GM10248 (cell line): ENCODE measurements at regions of chr22 and their contacts with region 1.

Region 1: DNA sequence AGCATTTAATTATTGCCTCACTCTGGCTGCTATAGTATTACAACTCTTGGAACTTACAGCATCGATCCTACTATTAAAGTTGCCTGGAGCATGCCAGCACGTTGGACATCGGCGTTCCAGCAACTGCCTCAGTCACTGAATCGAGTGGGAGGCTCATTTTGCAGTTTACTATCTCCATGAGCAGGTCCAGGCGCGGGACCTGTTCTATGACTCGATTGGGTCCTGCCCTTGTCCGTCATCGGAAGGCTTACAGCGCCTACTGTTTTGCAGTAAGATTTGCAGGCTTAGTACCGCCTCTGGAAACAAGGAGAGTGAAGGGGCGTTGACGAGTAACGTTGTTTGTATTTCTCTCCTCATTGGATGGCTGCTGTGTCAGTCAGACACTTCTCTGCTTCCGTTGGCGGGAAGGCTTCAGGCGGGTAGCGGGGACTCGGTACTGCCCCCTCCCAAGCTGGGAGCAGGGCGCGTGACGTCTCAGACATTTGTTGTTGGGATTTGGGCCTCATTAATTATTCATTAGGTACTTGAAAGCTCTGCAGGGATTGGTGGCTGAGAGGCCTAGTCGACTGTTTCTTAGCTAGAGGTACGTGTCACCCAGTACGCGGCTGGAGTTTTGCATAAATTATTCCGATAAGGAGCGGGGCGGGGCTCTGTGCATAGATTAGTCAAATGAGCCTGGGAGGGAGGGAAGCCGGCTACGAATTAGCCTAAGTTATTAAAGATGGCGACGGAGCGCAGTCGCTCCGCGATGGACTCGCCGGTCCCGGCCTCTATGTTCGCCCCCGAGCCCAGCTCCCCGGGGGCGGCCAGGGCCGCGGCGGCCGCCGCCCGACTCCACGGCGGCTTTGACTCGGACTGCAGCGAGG is at the start of gene GTPBP1:
- DNase-seq: peak; percentile 96
- CTCF ChIP-seq: no peak

Region 2: DNA sequence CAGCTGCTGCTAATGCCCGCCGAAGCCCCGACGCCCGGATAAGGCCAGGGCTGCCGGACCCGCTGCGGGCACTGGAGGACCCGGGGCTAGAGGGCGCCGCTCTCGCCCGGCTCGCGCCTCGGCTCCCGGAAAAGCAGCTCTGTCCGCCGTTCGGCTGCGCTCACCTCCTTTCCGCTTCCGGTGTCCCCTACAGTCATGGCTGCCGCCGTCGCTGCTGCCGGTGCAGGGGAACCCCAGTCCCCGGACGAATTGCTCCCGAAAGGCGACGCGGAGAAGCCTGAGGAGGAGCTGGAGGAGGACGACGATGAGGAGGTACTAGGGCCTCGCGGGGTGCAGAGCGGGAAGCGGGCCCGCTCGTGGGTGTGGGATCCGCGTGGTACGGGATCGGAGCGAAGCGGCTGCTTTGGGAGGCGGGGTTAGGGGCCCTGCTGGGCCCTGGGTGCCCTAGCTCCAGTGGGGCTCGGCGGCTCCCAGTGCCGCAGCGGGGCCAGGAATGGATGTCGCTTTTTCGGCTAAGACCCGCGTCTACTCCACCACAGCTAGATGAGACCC is 23.6 kb before region 1 on chr22 and contains the start of gene TOMM22:
- CTCF ChIA-PET with region 1: interaction called, 48 read pairs
- POLR2A ChIA-PET with region 1: interaction called, 5 read pairs
- DNase-seq: peak; percentile 98
- CTCF ChIP-seq: peak; percentile 78

Region 3: DNA sequence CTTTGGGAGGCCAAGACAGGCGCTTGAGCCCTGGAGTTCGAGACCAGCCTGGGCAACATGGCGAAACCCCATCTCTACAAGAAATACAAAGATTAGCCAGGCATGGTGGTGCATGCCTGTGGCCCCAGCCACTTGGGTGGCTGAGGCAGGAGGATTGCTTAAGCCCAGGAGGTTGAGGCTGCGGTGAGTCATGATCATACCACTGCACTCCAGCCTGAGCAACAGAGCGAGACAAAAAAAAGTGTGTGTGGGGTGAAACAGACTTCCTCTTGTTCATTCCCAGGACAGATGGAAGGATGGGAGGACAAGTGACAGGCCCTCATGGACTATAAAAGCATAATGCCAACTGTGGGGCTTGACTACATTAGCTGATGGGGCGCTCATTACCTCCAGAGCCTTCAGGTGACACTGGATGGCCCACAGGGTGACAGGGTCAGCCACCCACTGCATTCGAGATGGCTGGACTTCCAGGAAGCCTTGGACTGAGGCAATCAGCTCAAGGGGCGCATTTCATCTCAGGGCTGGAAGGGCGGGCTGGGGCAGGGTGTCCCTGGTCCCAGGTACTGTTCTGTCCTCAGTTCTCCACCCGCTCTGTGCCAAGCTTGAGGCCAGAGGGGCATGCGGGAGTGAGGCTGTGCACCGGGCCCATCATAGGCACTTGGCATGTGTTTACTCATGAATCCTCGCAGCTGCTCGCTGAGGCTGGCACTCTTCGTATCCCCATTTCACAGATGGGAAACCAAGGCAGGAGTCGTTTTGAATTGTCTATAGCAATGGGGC is 125.9 kb after region 1 on chr22:
- CTCF ChIA-PET with region 1: no interaction called
- POLR2A ChIA-PET with region 1: no interaction called
- DNase-seq: no peak
- CTCF ChIP-seq: no peak

Region 4: GRCh38 chr22:39281126-39281525 is 575.7 kb after region 1 on chr22:
- CTCF ChIA-PET with region 1: no interaction called
- POLR2A ChIA-PET with region 1: interaction called, 10 read pairs
- DNase-seq: no peak
- CTCF ChIP-seq: no peak